ENCODE measurements at regions of chr12 and their contacts with region 1.

Region 1: GRCh38 chr12:47715393-47715876 is 9.6 kb upstream of the RPAP3 start:
- DNase-seq: peak; percentile 77
- CTCF ChIP-seq: peak; percentile 74

Region 2: DNA sequence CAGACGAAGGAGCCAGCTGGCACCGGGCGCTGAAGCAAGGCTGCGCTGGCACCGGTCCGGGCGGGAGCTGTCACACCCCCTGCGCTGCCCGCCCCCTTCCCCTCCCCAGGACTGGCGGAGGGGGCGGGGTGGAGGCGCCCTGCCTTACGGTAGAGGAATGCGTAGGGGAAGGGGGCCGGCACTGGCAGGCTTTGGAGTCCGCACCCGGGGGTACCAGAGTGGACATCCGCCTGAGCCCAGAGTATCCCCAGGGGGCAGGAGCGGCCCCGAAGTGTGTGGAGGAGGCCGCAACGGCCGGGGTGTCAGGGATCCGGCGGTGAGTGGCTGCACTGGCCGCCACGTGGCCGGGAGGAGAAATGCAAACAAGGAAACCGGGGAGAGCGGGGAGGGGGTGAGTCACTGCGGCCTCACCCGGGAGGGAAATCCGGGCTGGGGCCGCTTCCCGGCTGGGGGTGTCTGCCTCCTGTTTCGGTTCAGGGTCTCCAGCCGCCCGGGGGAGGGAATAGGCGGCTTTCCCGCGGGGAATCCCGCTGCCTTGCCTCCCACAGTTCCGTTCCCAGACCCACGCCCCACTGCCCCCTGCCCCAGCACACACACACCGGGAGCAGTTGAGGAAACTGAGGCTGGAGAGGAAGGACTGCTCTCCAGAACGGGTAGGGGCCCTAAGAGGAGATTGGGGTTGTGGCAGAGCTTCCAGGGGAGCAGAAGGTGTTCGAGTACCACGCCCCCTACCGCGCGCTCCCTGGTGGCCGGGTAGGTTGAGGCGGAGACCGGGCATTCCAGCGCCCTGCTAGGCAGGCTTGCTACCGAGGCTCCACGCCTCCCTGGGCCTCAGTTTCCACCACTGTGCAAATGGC is 43.6 kb after region 1 on chr12 and contains the start of gene RAPGEF3:
- in situ Hi-C with region 1: no loop called
- DNase-seq: peak; percentile 86
- CTCF ChIP-seq: peak; percentile 63

Region 3: DNA sequence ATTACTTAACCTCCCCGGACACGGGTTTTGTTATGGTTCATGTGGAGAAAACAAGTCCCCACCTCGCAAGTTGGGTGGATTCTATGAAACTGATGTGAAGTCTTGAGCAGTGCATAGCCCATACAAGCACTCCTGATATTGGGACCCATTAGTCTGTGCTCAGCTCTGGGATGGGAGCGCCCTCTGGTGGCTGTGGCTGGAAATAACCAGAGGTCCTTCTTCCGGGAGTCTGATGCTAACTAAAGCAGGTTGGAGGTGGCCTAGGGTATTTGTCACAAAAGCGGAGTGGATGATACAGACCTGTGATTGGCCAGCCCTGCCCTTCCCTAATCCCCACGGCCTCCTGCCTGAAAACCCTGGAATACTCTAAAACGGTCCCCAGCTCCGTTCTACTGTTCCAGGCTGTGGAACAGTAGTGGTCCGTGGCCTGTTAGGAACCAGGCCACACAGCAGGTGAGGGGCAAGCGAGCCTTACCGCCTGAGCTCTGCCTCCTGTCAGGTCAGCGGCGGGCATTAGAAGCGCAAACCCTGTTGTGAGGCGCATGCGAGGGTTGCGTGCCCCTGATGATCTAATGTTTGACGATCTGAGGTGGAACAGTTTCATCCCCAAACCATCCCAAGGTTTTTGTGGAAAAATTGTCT is 64.0 kb after region 1 on chr12:
- in situ Hi-C with region 1: loop called (anchors 10 kb)
- DNase-seq: peak; percentile 91
- CTCF ChIP-seq: peak; percentile 94

Region 4: GRCh38 chr12:47844274-47845019 is 129.0 kb after region 1 on chr12:
- in situ Hi-C with region 1: loop called (anchors 10 kb)
- DNase-seq: no peak
- CTCF ChIP-seq: no peak

Region 5: DNA sequence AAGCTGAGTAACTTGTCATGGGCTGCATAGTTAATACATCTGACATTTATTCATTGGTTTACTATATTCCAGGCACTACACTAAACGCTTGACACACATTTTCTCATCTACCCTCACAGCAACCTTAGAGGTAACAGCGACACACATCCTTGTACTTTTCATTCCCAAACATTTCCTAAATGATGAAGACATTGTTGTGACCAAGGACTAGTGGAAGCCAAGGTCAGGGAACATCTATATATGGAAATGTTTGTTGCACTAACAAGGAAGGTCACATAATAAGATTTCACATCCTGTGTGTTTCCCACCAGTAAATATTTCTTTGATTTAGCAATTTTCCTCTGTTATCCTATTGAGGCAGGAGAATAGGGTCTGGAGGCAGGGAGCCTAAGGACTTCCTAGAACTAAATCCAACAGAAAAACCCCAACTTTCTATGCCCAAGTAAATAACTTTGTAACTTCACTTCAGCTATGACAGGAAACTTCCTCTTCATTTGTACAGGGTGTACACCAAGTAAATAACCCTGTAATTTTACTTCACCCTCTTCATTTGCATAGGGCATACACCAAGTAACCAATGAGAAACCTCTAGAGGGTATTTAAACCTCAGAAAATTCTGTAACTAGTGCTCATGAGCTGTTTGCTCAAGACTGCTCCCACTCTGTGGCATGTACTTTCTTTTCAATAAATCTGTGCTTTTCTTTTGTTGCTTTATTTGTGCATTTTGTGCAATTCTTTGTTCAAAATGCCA is 586.9 kb after region 1 on chr12:
- in situ Hi-C with region 1: no loop called
- DNase-seq: no peak
- CTCF ChIP-seq: no peak

Measured in GM13977 (cell line).